ENCODE measurements at regions of chr15 and their contacts with region 1.

Region 1: GRCh38 chr15:36579792-36580431 is 486 bp downstream of the CDIN1 start:
- DNase-seq: no peak
- H3K4me3 ChIP-seq: peak overlapping the region; percentile 74 to 76
- H3K27ac ChIP-seq: peak overlapping the region; percentile 72 to 85
- H3K4me1 ChIP-seq: peaks cover 0 to 3% of the 10 kb centered on the region in 2 donors
- H3K27me3 ChIP-seq: no peaks in the 10 kb centered on the region
- CTCF ChIP-seq: no peak

Region 2: DNA sequence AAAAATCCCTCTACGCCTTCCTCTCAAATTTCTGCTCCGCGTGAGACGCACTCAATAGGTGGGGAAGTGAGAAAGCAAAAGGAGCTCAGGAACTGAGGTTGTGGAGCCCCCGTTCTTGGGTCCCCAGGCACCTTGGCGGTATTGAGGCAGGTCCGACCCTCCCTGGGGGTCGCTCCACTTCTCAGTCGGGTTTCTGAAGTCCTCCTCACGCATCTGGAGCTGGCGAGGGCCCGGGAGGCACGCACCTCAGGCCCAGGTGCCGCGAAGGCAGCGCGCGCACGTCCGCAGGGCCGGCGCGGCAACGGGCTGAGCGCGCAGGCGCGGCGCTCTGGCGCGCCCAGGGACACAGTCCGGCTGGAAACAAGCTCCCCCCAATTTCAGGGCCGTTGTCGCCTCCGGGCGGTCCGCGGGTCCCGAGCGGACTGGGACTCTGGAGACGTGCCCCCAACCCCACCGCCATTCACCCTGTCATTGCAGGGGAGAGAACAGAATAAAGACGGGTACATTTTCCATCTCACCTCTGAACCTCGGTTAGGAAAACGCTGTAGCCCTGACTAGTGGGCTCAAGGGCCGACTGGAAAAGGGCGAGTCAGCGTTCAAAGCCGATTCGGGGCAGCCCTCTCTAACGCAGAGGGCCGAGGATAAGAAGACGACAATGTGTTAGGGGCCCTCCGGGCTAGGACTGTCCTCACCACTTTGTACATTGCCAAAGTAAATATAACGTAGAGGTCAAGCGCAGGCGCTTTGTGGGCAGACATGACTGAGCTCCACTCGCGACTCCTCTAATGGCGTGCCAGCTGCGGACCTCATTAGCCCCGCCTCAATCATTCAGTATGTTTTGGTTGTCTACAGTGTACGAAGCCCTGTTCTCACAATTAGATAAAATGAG is 1591.7 kb before region 1 on chr15 and contains the start of gene ZNF770:
- intact Hi-C with region 1: loop called (anchors 5 kb)
- DNase-seq: peak in 1 of 2 donors; percentile 86
- H3K4me3 ChIP-seq: peak within 1 kb of the TSS; percentile 71 to 85
- H3K27ac ChIP-seq: peak within 1 kb of the TSS; percentile 95 to 97
- H3K4me1 ChIP-seq: peaks cover 0 to 24% of the 10 kb centered on the region in 2 donors
- H3K27me3 ChIP-seq: no peaks in the 10 kb centered on the region
- CTCF ChIP-seq: no peak
- total RNA-seq, gene ZNF770: 87.7 TPM

Region 3: DNA sequence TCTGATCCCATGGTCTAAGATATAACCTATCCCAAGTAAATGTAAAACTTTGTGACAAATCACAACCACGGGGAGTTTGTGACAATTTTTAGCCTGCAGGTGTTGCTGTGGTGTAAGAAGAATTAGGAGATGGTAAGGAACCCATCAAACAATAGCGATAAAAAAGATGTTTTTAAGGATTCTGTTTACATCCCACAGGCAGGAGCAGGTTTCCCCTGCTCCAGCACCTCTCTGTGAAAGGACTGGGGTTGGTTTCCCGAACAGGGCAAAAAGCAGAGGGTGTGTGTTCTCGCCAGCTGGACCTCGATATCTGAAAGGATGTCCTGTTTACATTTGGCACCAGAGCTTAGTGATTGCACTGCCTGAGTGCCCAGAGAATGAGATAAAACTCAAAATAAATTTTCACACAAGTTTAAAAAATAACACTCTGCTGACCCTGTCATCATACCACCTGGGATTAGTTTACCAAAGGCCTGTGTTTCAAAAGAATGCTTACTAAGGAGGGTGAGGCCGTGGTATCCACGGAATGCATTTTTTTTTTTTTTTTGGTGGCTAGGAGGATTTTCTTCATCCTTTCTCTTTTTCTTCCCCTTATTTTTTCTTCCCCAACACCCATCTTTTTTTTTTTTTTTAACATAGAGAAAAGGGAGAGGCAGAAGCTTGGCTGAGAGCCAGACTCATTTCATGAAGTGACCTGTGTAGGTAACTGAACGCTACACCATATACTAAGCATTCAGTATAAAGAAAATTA is 882.2 kb before region 1 on chr15:
- intact Hi-C with region 1: loop called (anchors 10 kb)
- DNase-seq: no peak
- H3K4me3 ChIP-seq: peak overlapping the region in 1 of 2 donors; percentile 7
- H3K27ac ChIP-seq: peak overlapping the region; percentile 62 to 76
- H3K4me1 ChIP-seq: peaks cover 9 to 23% of the 10 kb centered on the region in 2 donors
- H3K27me3 ChIP-seq: no peaks in the 10 kb centered on the region
- CTCF ChIP-seq: peak in 1 of 3 experiments; percentile 21

Region 4: GRCh38 chr15:36356978-36357601 is 222.8 kb before region 1 on chr15:
- intact Hi-C with region 1: loop called (anchors 10 kb)
- DNase-seq: no peak
- H3K4me3 ChIP-seq: peak overlapping the region in 1 of 2 donors; percentile 14
- H3K27ac ChIP-seq: peak overlapping the region; percentile 84
- H3K4me1 ChIP-seq: peaks cover 8 to 18% of the 10 kb centered on the region in 2 donors
- H3K27me3 ChIP-seq: no peaks in the 10 kb centered on the region
- CTCF ChIP-seq: no peak

Region 5: DNA sequence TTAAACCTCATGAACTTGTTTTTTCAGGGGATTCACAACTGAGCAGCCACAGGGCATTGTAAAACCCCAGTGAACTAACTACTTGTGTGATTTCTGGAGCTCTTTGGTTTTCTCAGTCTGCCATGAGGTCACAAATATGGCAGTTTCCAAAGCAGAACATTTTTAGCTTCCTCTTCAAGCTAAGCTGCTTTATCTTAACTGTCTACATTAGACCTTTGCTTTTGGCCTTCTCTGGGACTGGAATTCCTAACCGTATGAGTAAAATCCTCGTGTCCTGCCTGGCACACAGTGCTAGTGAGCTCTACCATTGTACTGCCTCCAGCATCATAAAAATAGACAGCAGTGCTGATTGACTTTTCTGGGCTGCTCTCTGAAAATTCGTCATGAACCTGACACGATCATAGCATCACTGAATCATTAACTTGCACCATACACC is 21.6 kb after region 1 on chr15:
- intact Hi-C with region 1: loop called (anchors 1 kb)
- DNase-seq: peak; percentile 27 to 90
- H3K4me3 ChIP-seq: peak overlapping the region in 1 of 2 donors; percentile 54
- H3K27ac ChIP-seq: peak overlapping the region; percentile 91 to 94
- H3K4me1 ChIP-seq: peaks cover 2 to 15% of the 10 kb centered on the region in 2 donors
- H3K27me3 ChIP-seq: no peaks in the 10 kb centered on the region
- CTCF ChIP-seq: no peak

Measured in ascending aorta (tissue), 2 donors.